ENCODE measurements at regions of chr9 and their contacts with region 1.

Region 1: GRCh38 chr9:127360829-127361228 is 36.1 kb upstream of the SLC2A8 start:
- DNase-seq: peak; percentile 79 to 81
- H3K4me3 ChIP-seq: no peak overlapping the region
- H3K4me3 Mint-ChIP-seq: no peak overlapping the region
- H3K27ac Mint-ChIP-seq: peak overlapping the region; percentile 70
- H3K4me1 ChIP-seq: peaks cover 12% of the 10 kb centered on the region
- H3K4me1 Mint-ChIP-seq: peaks cover 18% of the 10 kb centered on the region
- H3K27me3 ChIP-seq: no peaks in the 10 kb centered on the region
- H3K27me3 Mint-ChIP-seq: no peaks in the 10 kb centered on the region
- CTCF ChIP-seq: peak; percentile 66 to 75

Region 2: DNA sequence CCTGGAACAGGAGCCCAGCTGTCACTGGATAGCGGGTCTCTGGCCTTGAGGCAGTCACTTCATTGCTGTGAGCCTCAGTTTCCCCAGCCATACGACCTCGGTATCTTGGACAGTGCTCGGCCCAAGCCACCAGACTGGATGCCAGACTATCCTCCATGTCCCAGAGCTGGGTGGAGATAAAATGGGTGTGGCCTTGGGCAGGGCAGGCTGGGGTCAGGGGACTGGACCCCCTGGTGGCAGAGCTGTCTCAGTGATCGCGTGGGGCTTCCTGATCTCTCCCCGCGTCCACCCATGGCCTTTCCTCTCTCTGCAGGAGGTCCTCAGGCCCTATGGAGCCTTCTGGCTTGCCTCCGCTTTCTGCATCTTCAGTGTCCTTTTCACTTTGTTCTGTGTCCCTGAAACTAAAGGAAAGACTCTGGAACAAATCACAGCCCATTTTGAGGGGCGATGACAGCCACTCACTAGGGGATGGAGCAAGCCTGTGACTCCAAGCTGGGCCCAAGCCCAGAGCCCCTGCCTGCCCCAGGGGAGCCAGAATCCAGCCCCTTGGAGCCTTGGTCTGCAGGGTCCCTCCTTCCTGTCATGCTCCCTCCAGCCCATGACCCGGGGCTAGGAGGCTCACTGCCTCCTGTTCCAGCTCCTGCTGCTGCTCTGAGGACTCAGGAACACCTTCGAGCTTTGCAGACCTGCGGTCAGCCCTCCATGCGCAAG is 46.1 kb after region 1 on chr9:
- CTCF ChIA-PET with region 1: interaction called, 3 read pairs
- POLR2A ChIA-PET with region 1: no interaction called
- intact Hi-C with region 1: loop called (anchors 2 kb)
- DNase-seq: no peak
- H3K4me3 ChIP-seq: no peak overlapping the region
- H3K4me3 Mint-ChIP-seq: no peak overlapping the region
- H3K27ac Mint-ChIP-seq: peak overlapping the region; percentile 76
- H3K4me1 ChIP-seq: no peaks in the 10 kb centered on the region
- H3K4me1 Mint-ChIP-seq: peaks cover 9% of the 10 kb centered on the region
- H3K27me3 ChIP-seq: no peaks in the 10 kb centered on the region
- H3K27me3 Mint-ChIP-seq: no peaks in the 10 kb centered on the region
- CTCF ChIP-seq: no peak

Region 3: DNA sequence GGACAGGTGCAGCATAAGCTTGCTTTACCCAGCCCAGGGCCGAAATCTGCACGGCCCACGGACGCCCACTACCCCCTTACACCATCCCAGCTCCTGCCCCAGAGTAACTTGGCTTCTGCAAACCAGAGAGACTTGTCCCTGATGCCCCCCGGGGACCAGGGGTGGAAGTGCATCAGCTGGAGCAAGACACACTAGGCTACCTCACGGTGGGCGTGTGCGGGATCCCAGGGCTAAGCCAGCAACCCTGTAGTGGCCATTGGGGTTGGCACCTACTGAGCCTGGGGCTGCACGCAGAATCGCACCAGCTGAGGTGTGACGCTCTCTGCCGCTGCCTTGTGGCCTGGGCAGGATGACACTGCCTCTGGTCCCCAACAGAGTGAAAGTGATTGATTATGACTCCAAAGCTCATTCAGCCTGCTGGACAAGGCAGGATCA is 57.2 kb after region 1 on chr9:
- CTCF ChIA-PET with region 1: interaction called, 6 read pairs
- POLR2A ChIA-PET with region 1: interaction called, 3 read pairs
- intact Hi-C with region 1: loop called (anchors 1 kb)
- DNase-seq: peak; percentile 80 to 84
- H3K4me3 ChIP-seq: no peak overlapping the region
- H3K4me3 Mint-ChIP-seq: no peak overlapping the region
- H3K27ac Mint-ChIP-seq: no peak overlapping the region
- H3K4me1 ChIP-seq: peaks cover 15% of the 10 kb centered on the region
- H3K4me1 Mint-ChIP-seq: peaks cover 21% of the 10 kb centered on the region
- H3K27me3 ChIP-seq: no peaks in the 10 kb centered on the region
- H3K27me3 Mint-ChIP-seq: no peaks in the 10 kb centered on the region
- CTCF ChIP-seq: peak; percentile 57 to 60

Measured in Caco-2 (cell line).